ENCODE measurements at regions of chr1 and their contacts with region 1.

Region 1: GRCh38 chr1:39672551-39672947 is 642 bp upstream of the NT5C1A start:
- DNase-seq: no peak
- H3K4me3 ChIP-seq: peak overlapping the region; percentile 45; the same call in 1 of the 2 replicates
- H3K27ac ChIP-seq: no peak overlapping the region
- H3K27me3 ChIP-seq: peaks cover 74% of the 10 kb centered on the region
- CTCF ChIP-seq: peak; percentile 56

Region 2: GRCh38 chr1:39720094-39720999 is 47.8 kb after region 1 on chr1:
- CTCF ChIA-PET with region 1: interaction called, 14 read pairs
- POLR2A ChIA-PET with region 1: no interaction called
- DNase-seq: peak; percentile 27
- H3K4me3 ChIP-seq: no peak overlapping the region
- H3K27ac ChIP-seq: no peak overlapping the region
- H3K27me3 ChIP-seq: peaks cover 27% of the 10 kb centered on the region
- CTCF ChIP-seq: peak; percentile 60

Measured in AG04450 (cell line).